ENCODE measurements at regions of chrX and their contacts with region 1.

Region 1: DNA sequence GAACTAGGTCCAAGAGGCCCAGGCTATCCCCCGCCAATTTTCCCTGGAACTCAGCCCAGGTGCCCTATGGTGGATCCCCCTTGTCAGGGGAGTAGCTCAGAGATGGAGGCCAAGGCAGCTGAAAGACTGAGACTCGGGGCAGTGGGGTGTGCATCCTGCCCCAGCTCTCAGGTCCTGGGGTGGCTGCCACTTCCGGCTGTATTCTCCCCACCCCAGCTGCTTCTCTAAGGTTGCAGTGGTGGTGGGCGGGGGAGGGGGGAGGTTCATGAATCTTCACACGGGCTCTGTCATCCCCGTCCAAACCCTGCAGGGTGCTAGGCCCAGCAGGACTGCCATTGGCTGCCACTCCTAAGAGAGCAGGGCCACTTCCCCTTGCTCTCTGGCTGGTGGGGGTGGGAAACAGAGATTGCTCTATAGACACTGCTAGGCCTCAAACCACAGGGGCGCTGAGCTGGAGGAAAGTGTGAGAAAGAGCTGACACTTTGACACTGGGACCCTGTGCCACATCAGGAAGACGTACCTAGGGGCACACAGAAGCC is 1.5 kb downstream of the SASH3 start:
- DNase-seq: peak; percentile 66 to 88
- ATAC-seq: peak; percentile 70 to 91 (median 80)
- H3K4me3 ChIP-seq: peak overlapping the region; percentile 92
- H3K4me3 Mint-ChIP-seq: peak overlapping the region; percentile 67
- H3K27ac ChIP-seq: peak overlapping the region; percentile 99
- H3K27ac Mint-ChIP-seq: peak overlapping the region; percentile 86 to 98
- H3K4me1 ChIP-seq: peaks cover 79% of the 10 kb centered on the region
- H3K4me1 Mint-ChIP-seq: peaks cover 63 to 67% of the 10 kb centered on the region in 2 donors
- H3K27me3 ChIP-seq: no peaks in the 10 kb centered on the region
- H3K27me3 Mint-ChIP-seq: no peaks in the 10 kb centered on the region
- CTCF ChIP-seq: no peak

Region 2: DNA sequence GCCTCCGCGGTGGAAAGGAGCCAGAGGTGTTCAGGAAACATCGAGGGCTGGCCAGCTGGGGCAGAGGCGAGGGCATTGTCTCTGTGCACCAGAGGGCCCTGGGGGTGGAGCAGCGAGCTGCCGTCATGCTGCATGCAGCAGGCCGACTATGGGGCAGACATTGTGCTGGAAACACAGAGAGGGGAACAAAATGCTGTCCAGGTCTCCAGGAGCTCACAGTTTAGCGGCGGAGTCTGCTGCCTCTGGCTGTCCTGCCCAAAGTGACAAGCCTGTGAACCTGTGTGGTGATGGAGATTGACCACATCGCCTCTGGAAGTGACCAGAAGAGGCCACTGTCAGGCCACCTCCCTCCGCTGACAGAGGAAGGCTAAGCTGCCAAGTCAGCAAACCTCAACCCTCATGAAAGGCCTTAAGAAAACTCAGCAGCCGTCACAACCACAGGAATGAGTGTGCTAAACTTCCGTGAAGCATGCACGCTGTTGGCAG is 21.6 kb before region 1 on chrX:
- intact Hi-C with region 1: loop called (anchors 2 kb)
- DNase-seq: peak; percentile 47 to 81
- ATAC-seq: peak; percentile 71 to 84 (median 76)
- H3K4me3 ChIP-seq: no peak overlapping the region
- H3K4me3 Mint-ChIP-seq: peak overlapping the region; percentile 53
- H3K27ac ChIP-seq: peak overlapping the region; percentile 68
- H3K27ac Mint-ChIP-seq: peak overlapping the region; percentile 85 to 87
- H3K4me1 ChIP-seq: peaks cover 68% of the 10 kb centered on the region
- H3K4me1 Mint-ChIP-seq: peaks cover 55 to 64% of the 10 kb centered on the region in 2 donors
- H3K27me3 ChIP-seq: no peaks in the 10 kb centered on the region
- H3K27me3 Mint-ChIP-seq: no peaks in the 10 kb centered on the region
- CTCF ChIP-seq: no peak

Region 3: GRCh38 chrX:129769467-129770353 is 11.5 kb before region 1 on chrX:
- intact Hi-C with region 1: loop called (anchors 1 kb)
- DNase-seq: peak in 1 of 2 donors; percentile 94
- ATAC-seq: peak; percentile 36 to 72 (median 66)
- H3K4me3 ChIP-seq: no peak overlapping the region
- H3K4me3 Mint-ChIP-seq: peak overlapping the region; percentile 65
- H3K27ac ChIP-seq: peak overlapping the region; percentile 77
- H3K27ac Mint-ChIP-seq: peak overlapping the region; percentile 75 to 83
- H3K4me1 ChIP-seq: peaks cover 81% of the 10 kb centered on the region
- H3K4me1 Mint-ChIP-seq: peaks cover 48 to 57% of the 10 kb centered on the region in 2 donors
- H3K27me3 ChIP-seq: no peaks in the 10 kb centered on the region
- H3K27me3 Mint-ChIP-seq: no peaks in the 10 kb centered on the region
- CTCF ChIP-seq: no peak

Region 4: DNA sequence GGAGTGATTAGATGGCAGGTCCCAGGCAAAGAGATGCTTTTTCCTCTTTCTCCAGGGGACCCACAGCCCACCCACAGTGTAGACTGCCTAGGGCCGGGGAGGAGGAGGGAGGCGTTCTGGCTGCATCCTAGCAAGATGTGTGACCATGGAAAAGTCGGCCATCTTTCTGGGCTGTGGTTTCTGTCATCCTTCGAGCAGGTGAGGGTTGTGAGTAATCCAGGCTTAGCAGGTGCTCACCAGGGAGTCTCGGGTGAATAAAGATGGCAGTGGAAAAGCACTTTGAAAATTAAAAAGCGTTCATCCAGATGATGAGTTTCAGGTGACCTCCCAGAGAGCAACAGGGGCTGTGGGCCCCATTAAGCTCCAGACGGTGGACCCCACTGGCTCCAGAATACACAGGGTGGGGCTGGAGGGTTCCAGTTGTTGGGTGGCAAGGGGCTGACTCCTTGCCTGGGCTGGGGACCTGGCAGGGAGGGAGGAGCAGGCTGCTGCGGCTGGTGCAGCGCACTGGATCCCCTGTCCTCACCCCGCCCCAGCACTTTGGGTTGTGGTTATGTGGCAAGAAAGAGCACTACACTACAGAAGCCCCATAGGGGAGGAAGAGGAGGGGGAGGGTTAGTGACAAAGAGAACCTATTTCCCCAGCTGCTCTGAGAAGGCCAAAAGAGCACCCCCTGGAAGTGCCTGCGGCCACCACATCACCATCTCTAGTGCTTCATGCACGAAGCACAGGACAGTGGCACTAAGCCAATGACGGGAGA is 305.4 kb after region 1 on chrX:
- intact Hi-C with region 1: loop called (anchors 5 kb)
- DNase-seq: peak; percentile 56 to 82
- ATAC-seq: peak; percentile 46 to 71 (median 67)
- H3K4me3 ChIP-seq: peak overlapping the region; percentile 46
- H3K4me3 Mint-ChIP-seq: peak overlapping the region; percentile 88
- H3K27ac ChIP-seq: peak overlapping the region; percentile 89
- H3K27ac Mint-ChIP-seq: peak overlapping the region; percentile 84 to 88
- H3K4me1 ChIP-seq: peaks cover 98% of the 10 kb centered on the region
- H3K4me1 Mint-ChIP-seq: peaks cover 60 to 71% of the 10 kb centered on the region in 2 donors
- H3K27me3 ChIP-seq: no peaks in the 10 kb centered on the region
- H3K27me3 Mint-ChIP-seq: no peaks in the 10 kb centered on the region
- CTCF ChIP-seq: no peak

Region 5: GRCh38 chrX:130165703-130166502 is 384.7 kb after region 1 on chrX and contains the start of gene AIFM1:
- intact Hi-C with region 1: loop called (anchors 5 kb)
- DNase-seq: peak; percentile 82 to 94
- ATAC-seq: peak; percentile 86 to 94 (median 88)
- H3K4me3 ChIP-seq: peak within 1 kb of the TSS; percentile 71
- H3K4me3 Mint-ChIP-seq: peak within 1 kb of the TSS; percentile 88
- H3K27ac ChIP-seq: peak within 1 kb of the TSS; percentile 91
- H3K27ac Mint-ChIP-seq: peak within 1 kb of the TSS; percentile 90 to 91
- H3K4me1 ChIP-seq: peaks cover 11% of the 10 kb centered on the region
- H3K4me1 Mint-ChIP-seq: peaks cover 17 to 29% of the 10 kb centered on the region in 2 donors
- H3K27me3 ChIP-seq: no peaks in the 10 kb centered on the region
- H3K27me3 Mint-ChIP-seq: peaks cover 0 to 15% of the 10 kb centered on the region in 2 donors
- CTCF ChIP-seq: no peak
- total RNA-seq, gene AIFM1: 16.2 to 21.1 (median 17.0) TPM